Activated T-helper 1 cell treated with anti-CD3 and anti-CD28 coated beads, Interleukin-12 subunit alpha, Interleukin-12 subunit beta, Interleukin-2, Interleukin-4 antibody, amounts not matched to agents 30 ng/mL and 10 ng/mL and 1 ng/mL, durations not matched to agents 14 hours and 24 hours and 36 hours (primary cell): ENCODE measurements at regions of chr1 and their contacts with region 1.

Region 1: DNA sequence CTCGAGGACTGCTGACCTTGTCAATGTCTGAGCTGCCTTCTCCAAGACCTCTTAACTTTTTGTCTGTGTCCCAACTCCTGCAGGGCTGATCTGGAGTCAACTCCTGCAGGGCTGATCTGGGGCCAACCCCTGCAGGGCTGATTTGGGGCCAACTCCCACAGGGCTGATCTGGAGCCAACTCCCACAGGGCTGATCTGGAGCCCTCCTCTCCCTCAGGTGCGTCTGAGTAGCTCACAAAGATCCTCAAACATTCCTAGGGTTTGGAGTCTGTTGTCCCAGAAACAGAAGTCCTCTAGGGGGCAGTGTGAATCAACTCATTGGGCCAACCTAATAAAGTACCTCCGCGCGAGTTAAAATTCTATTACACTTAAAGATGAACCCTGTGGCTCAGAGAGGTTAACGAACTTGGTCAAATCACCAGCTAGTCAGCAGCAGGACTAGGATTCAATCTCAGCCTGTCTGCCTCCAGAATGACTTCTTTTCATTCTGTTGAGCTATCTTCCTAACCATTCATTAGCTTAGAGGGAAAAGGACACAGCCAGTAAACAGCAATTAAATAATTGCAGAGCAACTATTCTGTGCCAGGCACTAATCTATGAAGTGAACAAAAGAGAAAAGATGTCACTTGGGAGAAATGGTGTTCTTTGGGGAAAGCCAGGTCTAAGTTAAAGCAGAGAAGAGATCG is 17.2 kb upstream of the RLF start:
- DNase-seq: peak; percentile 44
- H3K4me3 Mint-ChIP-seq: no peak overlapping the region
- H3K27ac Mint-ChIP-seq: no peak overlapping the region
- H3K4me1 Mint-ChIP-seq: peaks cover 32% of the 10 kb centered on the region
- H3K27me3 Mint-ChIP-seq: peaks cover 29% of the 10 kb centered on the region

Region 2: GRCh38 chr1:40078512-40079333 is 65.3 kb before region 1 on chr1:
- intact Hi-C with region 1: loop called (anchors 5 kb)
- DNase-seq: peak; percentile 40
- H3K4me3 Mint-ChIP-seq: no peak overlapping the region
- H3K27ac Mint-ChIP-seq: peak overlapping the region; percentile 75
- H3K4me1 Mint-ChIP-seq: peaks cover 9% of the 10 kb centered on the region
- H3K27me3 Mint-ChIP-seq: no peaks in the 10 kb centered on the region

Region 3: GRCh38 chr1:40185951-40186864 is 42.2 kb after region 1 on chr1:
- intact Hi-C with region 1: no loop called
- DNase-seq: peak; percentile 21
- H3K4me3 Mint-ChIP-seq: peak overlapping the region; percentile 72
- H3K27ac Mint-ChIP-seq: peak overlapping the region; percentile 69
- H3K4me1 Mint-ChIP-seq: peaks cover 62% of the 10 kb centered on the region
- H3K27me3 Mint-ChIP-seq: no peaks in the 10 kb centered on the region

Region 4: GRCh38 chr1:40338745-40339424 is 194.9 kb after region 1 on chr1:
- intact Hi-C with region 1: loop called (anchors 1 kb)
- DNase-seq: peak; percentile 84
- H3K4me3 Mint-ChIP-seq: peak overlapping the region; percentile 38
- H3K27ac Mint-ChIP-seq: peak overlapping the region; percentile 75
- H3K4me1 Mint-ChIP-seq: peaks cover 53% of the 10 kb centered on the region
- H3K27me3 Mint-ChIP-seq: no peaks in the 10 kb centered on the region

Region 5: GRCh38 chr1:40438391-40439015 is 294.5 kb after region 1 on chr1:
- intact Hi-C with region 1: loop called (anchors 1 kb)
- DNase-seq: no peak
- H3K4me3 Mint-ChIP-seq: no peak overlapping the region
- H3K27ac Mint-ChIP-seq: no peak overlapping the region
- H3K4me1 Mint-ChIP-seq: peaks cover 16% of the 10 kb centered on the region
- H3K27me3 Mint-ChIP-seq: no peaks in the 10 kb centered on the region

Region 6: GRCh38 chr1:40849801-40850592 is 706.0 kb after region 1 on chr1:
- intact Hi-C with region 1: loop called (anchors 1 kb)
- DNase-seq: peak; percentile 70
- H3K4me3 Mint-ChIP-seq: no peak overlapping the region
- H3K27ac Mint-ChIP-seq: peak overlapping the region; percentile 4
- H3K4me1 Mint-ChIP-seq: peaks cover 34% of the 10 kb centered on the region
- H3K27me3 Mint-ChIP-seq: no peaks in the 10 kb centered on the region